Endothelial cell of umbilical vein (primary cell): ENCODE measurements at regions of chr16 and their contacts with region 1.

Region 1: GRCh38 chr16:58000706-58001676 is at the start of gene USB1:
- DNase-seq: peak; percentile 74
- H3K4me3 ChIP-seq: peak within 1 kb of the TSS; percentile 68 to 90 (median 85)
- H3K27ac ChIP-seq: peak within 1 kb of the TSS; percentile 19
- H3K4me1 ChIP-seq: peaks cover 17% of the 10 kb centered on the region
- H3K27me3 ChIP-seq: no peaks in the 10 kb centered on the region
- CTCF ChIP-seq: peak; percentile 63 to 73
- POLR2A ChIP-seq: peak; percentile 92
- total RNA-seq, gene USB1: 64.6 and 66.6 TPM in 2 replicates

Region 2: GRCh38 chr16:57899771-57900661 is 101.0 kb before region 1 on chr16:
- CTCF ChIA-PET with region 1: interaction called, 27 read pairs
- POLR2A ChIA-PET with region 1: no interaction called
- dilution Hi-C with region 1: no loop called
- intact Hi-C with region 1: loop called (anchors 1 kb)
- DNase-seq: peak; percentile 67
- H3K4me3 ChIP-seq: no peak overlapping the region
- H3K27ac ChIP-seq: no peak overlapping the region
- H3K4me1 ChIP-seq: no peaks in the 10 kb centered on the region
- H3K27me3 ChIP-seq: peaks cover 0 to 3% of the 10 kb centered on the region in 2 experiments
- CTCF ChIP-seq: peak; percentile 85 to 87
- POLR2A ChIP-seq: no peak

Region 3: GRCh38 chr16:57906382-57907316 is 94.3 kb before region 1 on chr16:
- CTCF ChIA-PET with region 1: interaction called, 36 read pairs
- POLR2A ChIA-PET with region 1: no interaction called
- dilution Hi-C with region 1: no loop called
- intact Hi-C with region 1: no loop called
- DNase-seq: peak; percentile 21
- H3K4me3 ChIP-seq: no peak overlapping the region
- H3K27ac ChIP-seq: no peak overlapping the region
- H3K4me1 ChIP-seq: no peaks in the 10 kb centered on the region
- H3K27me3 ChIP-seq: peaks cover 0 to 3% of the 10 kb centered on the region in 2 experiments
- CTCF ChIP-seq: peak; percentile 34 to 61
- POLR2A ChIP-seq: no peak

Region 4: DNA sequence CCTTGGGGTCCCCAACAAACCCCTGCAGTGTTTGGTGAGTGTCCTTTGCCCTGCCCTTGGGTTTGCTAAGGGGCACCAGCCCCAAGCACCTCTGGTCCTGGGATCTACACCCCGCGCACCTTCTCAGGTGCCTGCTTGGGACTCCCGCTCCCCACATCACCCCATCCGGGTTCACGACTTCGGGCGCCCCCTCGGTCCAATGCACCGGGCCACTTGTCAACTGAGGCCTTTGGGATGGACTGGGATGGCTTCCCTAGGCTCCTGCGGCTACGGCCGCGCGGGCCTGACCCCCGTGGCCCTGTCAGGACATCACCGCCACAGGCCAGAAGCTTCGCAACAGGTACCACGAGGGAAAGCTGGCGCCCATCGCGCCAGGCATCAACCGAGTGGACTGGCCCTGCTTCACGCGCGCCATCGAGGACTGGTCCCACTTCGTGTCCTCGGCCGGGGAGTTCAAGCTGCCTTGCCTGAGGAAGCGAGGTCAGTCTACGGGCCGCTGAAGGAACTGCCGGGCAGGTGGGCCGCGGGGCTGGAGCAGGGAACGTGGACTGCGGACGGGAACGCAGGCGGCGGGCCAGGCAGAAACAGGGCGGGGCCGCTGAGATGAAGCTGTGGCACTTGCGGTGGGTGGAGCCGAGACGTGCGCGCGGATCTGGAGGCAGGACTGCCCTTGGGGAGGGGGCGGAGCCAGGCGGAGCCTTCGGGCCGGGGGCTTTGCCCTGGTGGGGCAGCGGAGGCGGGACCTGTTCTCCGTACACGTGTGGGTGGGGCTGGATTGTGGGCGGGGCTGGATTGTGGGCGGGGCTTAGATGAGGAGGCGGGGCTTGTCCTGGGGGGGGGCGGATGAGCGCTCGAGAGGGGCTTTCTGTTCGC is 16.4 kb before region 1 on chr16:
- CTCF ChIA-PET with region 1: interaction called, 5 read pairs
- POLR2A ChIA-PET with region 1: no interaction called
- dilution Hi-C with region 1: no loop called
- intact Hi-C with region 1: loop called (anchors 2 kb)
- DNase-seq: peak; percentile 85
- H3K4me3 ChIP-seq: peak overlapping the region; percentile 50 to 79 (median 58)
- H3K27ac ChIP-seq: no peak overlapping the region
- H3K4me1 ChIP-seq: peaks cover 9% of the 10 kb centered on the region
- H3K27me3 ChIP-seq: no peaks in the 10 kb centered on the region
- CTCF ChIP-seq: no peak
- POLR2A ChIP-seq: no peak